Colonic mucosa (tissue), 4 donors: ENCODE measurements at regions of chr1 and their contacts with region 1.

Region 1: DNA sequence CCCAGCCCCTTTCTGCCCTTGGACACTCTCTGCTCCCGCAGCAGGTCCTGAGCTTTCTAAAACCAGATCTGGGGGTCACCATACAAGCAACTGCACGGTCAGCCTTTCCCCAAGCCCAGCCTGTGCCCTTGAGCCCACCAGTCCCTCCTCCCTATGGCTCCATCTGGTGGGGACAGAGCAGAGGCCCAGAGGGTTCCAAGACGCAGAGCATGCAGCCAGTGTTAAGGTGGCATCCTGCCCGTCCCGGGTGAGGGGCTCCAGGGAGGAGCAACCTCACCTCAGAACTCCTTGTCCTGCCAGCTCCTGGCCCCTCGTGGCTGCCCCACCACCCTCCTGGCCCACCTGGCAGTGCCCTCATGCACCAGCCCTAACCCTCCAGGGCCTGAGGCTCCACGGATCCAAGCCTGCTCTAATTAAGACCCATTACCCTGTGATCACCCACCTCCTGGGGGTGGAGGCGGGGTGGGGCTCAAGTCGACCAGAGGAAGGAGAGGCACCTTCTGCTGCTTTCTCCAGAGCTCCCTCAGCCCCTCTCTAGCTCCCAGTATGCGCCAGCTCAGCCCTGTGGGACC is 8.5 kb downstream of the CHD5 start:
- DNase-seq: no peak
- H3K4me3 ChIP-seq: no peak overlapping the region
- H3K27ac ChIP-seq: no peak overlapping the region
- H3K4me1 ChIP-seq: no peaks in the 10 kb centered on the region
- H3K27me3 ChIP-seq: no peaks in the 10 kb centered on the region
- CTCF ChIP-seq: no peak

Region 2: DNA sequence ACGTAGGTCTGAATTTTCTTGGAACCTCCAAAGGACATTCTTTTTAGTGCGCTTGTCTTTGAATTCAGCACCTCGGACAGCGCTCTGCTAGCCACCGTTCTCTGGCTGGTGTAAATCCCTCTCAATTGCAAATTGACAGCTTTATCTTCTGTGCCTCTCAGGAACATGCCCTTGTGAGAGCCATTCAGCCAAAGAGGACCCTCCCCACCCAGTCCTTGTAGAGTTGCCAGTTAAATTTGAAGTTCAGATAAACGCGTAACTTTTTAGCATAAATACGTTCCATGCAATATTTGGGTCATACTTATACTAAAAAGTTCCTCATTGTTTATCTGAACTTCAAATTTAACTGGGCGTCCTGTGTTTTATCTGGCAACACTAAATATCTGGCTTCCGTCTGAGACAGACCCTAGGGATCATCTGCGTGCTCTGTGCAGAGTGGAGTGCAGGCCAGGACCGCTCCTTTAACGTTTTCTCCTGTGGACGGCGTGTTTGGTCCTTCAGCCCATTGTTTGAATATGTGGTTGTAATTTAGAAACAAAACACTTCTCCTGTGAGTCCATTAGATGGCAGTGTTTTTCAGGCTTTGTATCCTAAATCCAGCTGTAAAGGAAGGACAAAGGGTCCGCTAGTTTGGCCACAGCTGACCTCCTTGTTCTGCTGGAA is 119.0 kb before region 1 on chr1:
- intact Hi-C with region 1: loop called (anchors 10 kb)
- DNase-seq: peak; percentile 52
- H3K4me3 ChIP-seq: no peak overlapping the region
- H3K27ac ChIP-seq: no peak overlapping the region
- H3K4me1 ChIP-seq: no peaks in the 10 kb centered on the region
- H3K27me3 ChIP-seq: no peaks in the 10 kb centered on the region
- CTCF ChIP-seq: peak; percentile 47